CD8-positive, alpha-beta memory T cell (primary cell): ENCODE measurements at regions of chr1 and their contacts with region 1.

Region 1: DNA sequence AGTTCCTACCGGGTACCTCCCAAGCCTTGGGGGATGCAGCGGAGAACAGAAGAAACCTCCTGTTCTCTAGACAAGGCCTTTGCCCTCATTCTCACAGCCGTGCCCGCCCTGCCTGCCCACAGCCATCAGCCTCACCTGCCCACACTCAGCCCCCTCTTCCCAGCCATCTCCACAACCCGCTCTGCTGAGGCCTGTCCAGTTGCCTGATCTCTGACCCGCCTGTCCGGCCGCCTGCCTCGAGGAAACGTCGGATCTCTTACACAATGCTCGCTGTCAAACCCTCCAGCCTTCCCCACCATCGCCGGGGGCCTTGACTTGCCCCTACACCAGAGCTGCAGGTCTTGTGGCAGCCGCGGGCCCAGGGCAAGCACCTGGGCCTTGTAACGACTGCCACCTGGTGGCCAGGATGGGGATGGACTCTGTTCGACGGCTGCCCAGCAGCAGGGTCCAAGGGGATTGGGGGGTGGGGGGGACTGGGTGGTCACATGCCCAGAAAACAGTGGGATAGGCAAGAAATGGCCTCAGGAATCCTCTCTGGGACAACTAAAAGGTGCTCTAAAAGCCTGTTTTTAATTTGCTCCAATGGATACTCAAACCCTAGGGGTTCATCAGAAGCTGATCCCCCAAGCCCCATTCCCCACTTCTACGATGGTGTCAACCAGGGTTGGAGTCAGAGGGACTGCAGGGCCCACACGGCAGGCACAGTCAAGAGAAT is 31.0 kb downstream of the SLC45A1 start:
- DNase-seq: peak; percentile 53 to 78 (median 60)
- H3K4me3 ChIP-seq: no peak overlapping the region
- H3K4me3 Mint-ChIP-seq: no peak overlapping the region
- H3K27ac ChIP-seq: no peak overlapping the region
- H3K27ac Mint-ChIP-seq: peak overlapping the region in 2 of 8 donors; percentile 66 to 70
- H3K4me1 ChIP-seq: peaks cover 5% of the 10 kb centered on the region
- H3K4me1 Mint-ChIP-seq: peaks cover 2 to 4% (median 4%) of the 10 kb centered on the region in 3 donors
- H3K27me3 ChIP-seq: no peaks in the 10 kb centered on the region
- H3K27me3 Mint-ChIP-seq: peaks cover 3 to 4% of the 10 kb centered on the region in 2 donors

Region 2: GRCh38 chr1:7983086-7983778 is 365.7 kb before region 1 on chr1:
- CTCF ChIA-PET with region 1: interaction called, 11 read pairs
- POLR2A ChIA-PET with region 1: interaction called, 3 read pairs
- DNase-seq: no peak
- H3K4me3 ChIP-seq: no peak overlapping the region
- H3K4me3 Mint-ChIP-seq: no peak overlapping the region
- H3K27ac ChIP-seq: no peak overlapping the region
- H3K27ac Mint-ChIP-seq: no peak overlapping the region
- H3K4me1 ChIP-seq: peaks cover 7% of the 10 kb centered on the region
- H3K4me1 Mint-ChIP-seq: peaks cover 9 to 14% (median 10%) of the 10 kb centered on the region in 3 donors
- H3K27me3 ChIP-seq: no peaks in the 10 kb centered on the region
- H3K27me3 Mint-ChIP-seq: peaks cover 0 to 2% of the 10 kb centered on the region in 2 donors

Region 3: DNA sequence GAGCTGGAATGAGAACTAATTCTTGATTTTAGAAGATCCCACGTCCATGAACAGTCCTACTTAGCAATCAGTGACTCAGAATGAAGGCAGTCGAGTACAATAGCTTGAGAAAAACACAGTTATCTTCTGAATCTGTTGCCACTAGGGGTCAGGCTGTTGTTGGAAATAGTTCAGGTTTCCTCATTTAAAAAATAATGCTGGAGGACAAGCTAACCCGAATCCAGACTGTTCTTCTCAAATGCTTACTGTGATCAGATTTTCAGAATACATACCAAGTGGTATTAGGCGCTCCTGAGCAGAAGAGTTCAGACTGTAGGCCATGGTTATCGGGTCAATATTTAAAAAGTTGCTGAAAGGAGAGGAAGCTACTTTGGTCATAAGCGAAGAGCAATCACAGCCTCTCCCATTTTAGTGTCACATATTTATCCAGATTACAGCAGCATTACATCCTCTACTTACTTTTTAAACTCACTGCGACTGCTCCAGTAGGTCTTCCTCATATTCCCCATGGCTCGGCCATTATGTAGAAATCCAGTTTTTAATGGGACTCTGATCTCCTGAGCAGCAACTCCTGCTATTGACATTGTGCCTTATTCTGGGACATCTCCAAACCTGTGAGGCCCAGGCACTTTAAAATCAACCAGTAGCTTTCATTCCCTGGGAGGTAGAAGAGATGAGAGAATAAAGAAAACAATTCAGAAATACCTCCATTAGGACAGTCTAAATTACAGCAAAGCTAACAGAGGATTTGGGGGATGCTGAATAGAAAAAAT is 333.7 kb before region 1 on chr1:
- CTCF ChIA-PET with region 1: interaction called, 83 read pairs
- POLR2A ChIA-PET with region 1: no interaction called
- DNase-seq: peak in 3 of 5 donors; percentile 8 to 50 (median 33)
- H3K4me3 ChIP-seq: no peak overlapping the region
- H3K4me3 Mint-ChIP-seq: no peak overlapping the region
- H3K27ac ChIP-seq: no peak overlapping the region
- H3K27ac Mint-ChIP-seq: no peak overlapping the region
- H3K4me1 ChIP-seq: no peaks in the 10 kb centered on the region
- H3K4me1 Mint-ChIP-seq: peaks cover 0 to 7% (median 0%) of the 10 kb centered on the region in 3 donors
- H3K27me3 ChIP-seq: no peaks in the 10 kb centered on the region
- H3K27me3 Mint-ChIP-seq: peaks cover 4 to 30% of the 10 kb centered on the region in 2 donors

Region 4: DNA sequence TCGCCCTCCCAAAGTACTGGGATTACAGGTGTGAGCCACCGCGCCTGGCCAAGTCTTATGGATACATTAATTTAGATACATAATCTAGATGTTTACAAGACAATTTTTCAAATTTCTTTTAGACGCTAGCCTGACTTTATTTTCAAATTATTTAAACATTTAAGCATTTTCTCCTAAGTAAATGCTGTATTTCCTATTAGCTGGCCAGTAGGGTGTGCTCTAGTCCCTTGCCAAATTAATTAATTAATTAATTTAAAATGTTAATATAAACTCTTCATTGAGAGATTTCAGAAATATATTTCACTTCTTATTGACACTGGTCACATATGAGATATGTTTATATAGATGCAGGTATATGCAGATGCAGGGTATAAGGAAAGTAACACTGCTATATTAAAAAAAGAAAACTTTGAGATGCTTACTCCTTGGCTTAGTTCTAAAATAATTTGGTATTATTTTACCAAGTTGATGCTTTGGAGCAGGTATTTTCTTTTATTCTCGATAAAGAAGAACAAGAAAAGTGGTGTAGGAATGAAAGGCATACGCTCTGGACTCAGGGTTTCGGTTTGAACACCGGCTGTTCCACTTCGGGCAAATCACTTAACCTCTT is 317.7 kb before region 1 on chr1:
- CTCF ChIA-PET with region 1: interaction called, 38 read pairs
- POLR2A ChIA-PET with region 1: no interaction called
- DNase-seq: peak in 2 of 5 donors; percentile 26 to 32
- H3K4me3 ChIP-seq: no peak overlapping the region
- H3K4me3 Mint-ChIP-seq: no peak overlapping the region
- H3K27ac ChIP-seq: no peak overlapping the region
- H3K27ac Mint-ChIP-seq: no peak overlapping the region
- H3K4me1 ChIP-seq: peaks cover 5% of the 10 kb centered on the region
- H3K4me1 Mint-ChIP-seq: peaks cover 6 to 7% (median 6%) of the 10 kb centered on the region in 3 donors
- H3K27me3 ChIP-seq: no peaks in the 10 kb centered on the region
- H3K27me3 Mint-ChIP-seq: peaks cover 0 to 6% of the 10 kb centered on the region in 2 donors